ENCODE measurements at regions of chr12 and their contacts with region 1.

Region 1: GRCh38 chr12:24991209-24992049 is 42.5 kb upstream of the BCAT1 start:
- DNase-seq: no peak
- ATAC-seq: peak; percentile 78 to 81
- H3K4me3 ChIP-seq: no peak overlapping the region
- H3K27ac ChIP-seq: no peak overlapping the region
- H3K4me1 ChIP-seq: no peaks in the 10 kb centered on the region
- H3K27me3 ChIP-seq: no peaks in the 10 kb centered on the region
- CTCF ChIP-seq: peak; percentile 48 to 61 (median 59)
- POLR2A ChIP-seq: no peak

Region 2: GRCh38 chr12:24770821-24771220 is 220.6 kb before region 1 on chr12:
- in situ Hi-C with region 1: no loop called
- intact Hi-C with region 1: no loop called
- DNase-seq: no peak
- ATAC-seq: no peak
- H3K4me3 ChIP-seq: no peak overlapping the region
- H3K27ac ChIP-seq: no peak overlapping the region
- H3K4me1 ChIP-seq: no peaks in the 10 kb centered on the region
- H3K27me3 ChIP-seq: no peaks in the 10 kb centered on the region
- CTCF ChIP-seq: no peak
- POLR2A ChIP-seq: no peak

Region 3: GRCh38 chr12:25020621-25021243 is 29.3 kb after region 1 on chr12:
- in situ Hi-C with region 1: no loop called
- intact Hi-C with region 1: no loop called
- DNase-seq: no peak
- ATAC-seq: no peak
- H3K4me3 ChIP-seq: no peak overlapping the region
- H3K27ac ChIP-seq: no peak overlapping the region
- H3K4me1 ChIP-seq: no peaks in the 10 kb centered on the region
- H3K27me3 ChIP-seq: no peaks in the 10 kb centered on the region
- CTCF ChIP-seq: no peak
- POLR2A ChIP-seq: no peak

Region 4: GRCh38 chr12:25130741-25131188 is 139.3 kb after region 1 on chr12:
- in situ Hi-C with region 1: loop called in 2 of 4 experiments (anchors 5 kb)
- intact Hi-C with region 1: loop called (anchors 1 kb)
- DNase-seq: no peak
- ATAC-seq: no peak
- H3K4me3 ChIP-seq: no peak overlapping the region
- H3K27ac ChIP-seq: no peak overlapping the region
- H3K4me1 ChIP-seq: no peaks in the 10 kb centered on the region
- H3K27me3 ChIP-seq: no peaks in the 10 kb centered on the region
- CTCF ChIP-seq: peak; percentile 19 to 57 (median 31)
- POLR2A ChIP-seq: no peak

Region 5: GRCh38 chr12:25386831-25387731 is 395.7 kb after region 1 on chr12:
- in situ Hi-C with region 1: no loop called
- intact Hi-C with region 1: loop called (anchors 1 kb)
- DNase-seq: peak; percentile 76 to 85
- ATAC-seq: peak; percentile 66 to 67
- H3K4me3 ChIP-seq: peak overlapping the region; percentile 69 to 94 (median 82)
- H3K27ac ChIP-seq: peak overlapping the region; percentile 91 to 98 (median 96)
- H3K4me1 ChIP-seq: peaks cover 0 to 6% of the 10 kb centered on the region in 2 donors
- H3K27me3 ChIP-seq: no peaks in the 10 kb centered on the region
- CTCF ChIP-seq: peak; percentile 82 to 89 (median 84)
- POLR2A ChIP-seq: peak in 1 of 2 donors; percentile 8

Region 6: DNA sequence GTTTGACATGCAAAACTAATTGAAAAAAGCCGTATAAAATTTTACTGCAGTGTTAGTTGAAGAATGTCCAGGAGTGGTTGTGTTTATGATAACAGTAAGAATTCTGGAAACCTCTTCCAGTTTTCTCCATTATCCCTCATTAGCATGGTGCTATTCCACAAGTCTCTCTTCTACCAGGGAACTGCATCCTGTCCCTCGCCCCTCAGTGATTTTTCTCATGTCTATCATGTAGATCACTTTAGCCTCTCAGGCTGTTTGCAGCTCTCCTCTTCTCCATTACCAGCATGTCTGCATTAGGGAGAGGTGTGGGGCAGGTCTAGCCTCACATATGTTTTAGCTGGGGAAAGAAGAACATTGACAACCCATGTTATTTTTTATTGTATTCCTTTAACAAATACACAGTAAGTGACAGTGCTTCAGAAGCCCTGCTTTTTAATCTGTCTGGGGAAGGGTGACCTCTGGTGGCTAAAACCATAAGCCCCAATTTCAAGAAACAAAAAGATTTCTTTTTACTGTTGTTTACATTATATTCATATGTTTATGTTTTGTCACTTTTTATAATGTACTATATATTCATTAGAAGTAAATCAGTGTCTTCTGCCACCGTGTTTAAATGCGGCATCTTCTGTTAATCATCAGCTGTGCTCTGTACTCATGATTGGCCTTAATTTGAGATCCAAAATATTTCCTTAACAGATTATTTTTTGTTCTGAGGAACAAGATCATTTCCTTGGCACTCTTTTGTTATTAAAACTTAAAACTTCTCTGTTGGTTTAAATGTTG is 1037.7 kb after region 1 on chr12:
- in situ Hi-C with region 1: no loop called
- intact Hi-C with region 1: loop called (anchors 10 kb)
- DNase-seq: no peak
- ATAC-seq: peak; percentile 70 to 76
- H3K4me3 ChIP-seq: no peak overlapping the region
- H3K27ac ChIP-seq: peak overlapping the region in 1 of 4 donors; percentile 27
- H3K4me1 ChIP-seq: peaks cover 23 to 39% of the 10 kb centered on the region in 2 donors
- H3K27me3 ChIP-seq: no peaks in the 10 kb centered on the region
- CTCF ChIP-seq: peak; percentile 62 to 87 (median 68)
- POLR2A ChIP-seq: no peak

Measured in gastrocnemius medialis (tissue), 4 donors.